ENCODE measurements at regions of chr17 and their contacts with region 1.

Region 1: GRCh38 chr17:45148183-45149036 is at the start of gene HEXIM1:
- DNase-seq: peak; percentile 99
- ATAC-seq: peak; percentile 78
- H3K4me3 Mint-ChIP-seq: peak within 1 kb of the TSS; percentile 99
- H3K27ac Mint-ChIP-seq: peak within 1 kb of the TSS; percentile 100
- H3K4me1 Mint-ChIP-seq: peaks cover 37% of the 10 kb centered on the region
- H3K27me3 Mint-ChIP-seq: no peaks in the 10 kb centered on the region
- total RNA-seq, gene HEXIM1: 27.1 to 27.3 TPM

Region 2: GRCh38 chr17:45051060-45051719 is 97.2 kb before region 1 on chr17 and contains the start of gene DCAKD:
- CTCF ChIA-PET with region 1: interaction called, 3 read pairs
- POLR2A ChIA-PET with region 1: interaction called, 9 read pairs
- intact Hi-C with region 1: loop called in 1 of 2 experiments (anchors 1 kb)
- DNase-seq: peak; percentile 96
- ATAC-seq: peak; percentile 97
- H3K4me3 Mint-ChIP-seq: peak within 1 kb of the TSS; percentile 87
- H3K27ac Mint-ChIP-seq: peak within 1 kb of the TSS; percentile 95
- H3K4me1 Mint-ChIP-seq: peaks cover 50% of the 10 kb centered on the region
- H3K27me3 Mint-ChIP-seq: no peaks in the 10 kb centered on the region
- total RNA-seq, gene DCAKD: 34.8 to 36.2 TPM

Region 3: GRCh38 chr17:45172454-45173286 is 24.3 kb after region 1 on chr17:
- CTCF ChIA-PET with region 1: interaction called, 41 read pairs
- POLR2A ChIA-PET with region 1: interaction called, 33 read pairs
- intact Hi-C with region 1: loop called (anchors 1 to 2 kb)
- DNase-seq: peak; percentile 81
- ATAC-seq: peak; percentile 88
- H3K4me3 Mint-ChIP-seq: peak overlapping the region; percentile 69
- H3K27ac Mint-ChIP-seq: peak overlapping the region; percentile 85
- H3K4me1 Mint-ChIP-seq: peaks cover 23% of the 10 kb centered on the region
- H3K27me3 Mint-ChIP-seq: no peaks in the 10 kb centered on the region

Region 4: GRCh38 chr17:45197555-45198334 is 49.3 kb after region 1 on chr17:
- CTCF ChIA-PET with region 1: interaction called, 72 read pairs
- POLR2A ChIA-PET with region 1: interaction called, 25 read pairs
- intact Hi-C with region 1: loop called in 1 of 2 experiments (anchors 1 kb)
- DNase-seq: peak; percentile 95
- ATAC-seq: peak; percentile 100
- H3K4me3 Mint-ChIP-seq: no peak overlapping the region
- H3K27ac Mint-ChIP-seq: no peak overlapping the region
- H3K4me1 Mint-ChIP-seq: peaks cover 2% of the 10 kb centered on the region
- H3K27me3 Mint-ChIP-seq: no peaks in the 10 kb centered on the region

Region 5: DNA sequence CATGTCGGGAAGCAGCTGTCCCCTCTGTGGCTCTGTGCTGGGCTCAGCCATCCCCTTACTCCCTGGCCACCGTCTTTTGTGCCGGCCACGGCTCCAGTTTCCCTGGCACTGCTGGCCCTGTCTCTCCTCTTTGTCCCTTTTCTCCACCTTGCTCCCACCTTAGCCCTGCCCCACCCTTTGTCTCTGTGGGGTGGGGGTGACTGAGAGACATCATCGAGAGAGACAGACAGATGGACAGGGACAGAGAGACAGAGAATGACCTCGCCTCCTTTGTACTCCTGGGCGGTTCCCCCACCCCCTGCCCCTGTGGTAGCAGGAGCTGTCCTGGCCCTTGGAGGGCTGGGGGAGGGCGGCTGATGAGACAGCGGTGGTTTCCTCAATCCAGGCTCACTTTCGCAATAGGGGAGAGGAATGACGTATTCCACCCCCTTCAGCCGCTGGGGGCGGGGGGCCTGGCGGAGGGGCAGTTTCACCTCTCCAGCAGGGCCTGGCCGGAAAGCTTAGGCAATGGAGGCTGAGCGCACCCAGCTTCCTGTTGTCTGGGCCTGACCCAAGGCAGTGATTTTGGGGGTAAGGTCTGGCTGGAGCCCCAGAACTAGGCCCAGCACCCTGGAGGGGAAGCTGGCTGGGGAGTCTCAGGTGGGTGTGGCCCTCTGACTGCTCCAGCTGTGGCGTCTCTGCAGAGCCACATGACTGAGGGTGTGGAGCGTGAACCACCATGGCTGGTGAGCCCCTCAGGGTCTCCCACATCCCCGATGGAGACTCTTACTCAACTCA is 80.5 kb after region 1 on chr17:
- CTCF ChIA-PET with region 1: interaction called, 10 read pairs
- POLR2A ChIA-PET with region 1: interaction called, 24 read pairs
- intact Hi-C with region 1: loop called in 1 of 2 experiments (anchors 1 kb)
- DNase-seq: peak; percentile 93
- ATAC-seq: peak; percentile 37
- H3K4me3 Mint-ChIP-seq: peak overlapping the region; percentile 94
- H3K27ac Mint-ChIP-seq: peak overlapping the region; percentile 100
- H3K4me1 Mint-ChIP-seq: peaks cover 82% of the 10 kb centered on the region
- H3K27me3 Mint-ChIP-seq: no peaks in the 10 kb centered on the region

Region 6: DNA sequence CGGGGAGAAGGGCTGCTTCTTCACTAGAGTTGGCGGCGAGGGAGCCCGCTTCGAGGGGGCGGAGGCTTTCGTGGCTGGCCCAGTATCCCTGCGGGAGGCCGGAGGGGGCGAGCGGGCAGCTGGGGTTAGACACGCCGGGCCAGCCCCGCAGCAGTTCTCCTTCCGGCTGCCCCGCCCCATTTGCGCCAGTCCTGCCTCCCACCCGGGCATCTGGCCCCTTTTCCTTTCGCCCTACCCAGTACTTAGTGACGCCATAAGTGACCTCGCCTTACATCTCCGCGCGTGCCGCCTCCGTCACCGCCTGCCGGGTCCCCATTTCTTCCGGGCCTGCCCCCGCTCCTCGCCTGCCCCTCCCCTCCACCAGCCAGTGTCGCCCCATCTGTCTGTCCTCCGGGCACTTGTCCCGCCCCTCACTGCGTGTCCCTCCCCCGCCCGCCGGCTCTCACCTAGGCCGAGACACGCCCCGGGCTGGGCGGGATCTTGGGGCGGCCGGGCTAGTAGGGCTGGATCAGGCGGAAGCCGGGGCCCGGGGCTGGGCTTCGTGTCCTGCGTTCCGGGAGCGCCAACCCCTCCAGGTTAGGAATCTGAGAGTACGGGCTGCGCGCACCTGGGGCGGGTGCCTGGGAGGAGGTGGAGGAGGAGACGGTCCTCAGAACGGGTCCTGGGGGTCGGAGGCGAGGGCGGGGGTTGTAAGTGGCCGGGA is 99.2 kb after region 1 on chr17:
- CTCF ChIA-PET with region 1: no interaction called
- POLR2A ChIA-PET with region 1: interaction called, 3 read pairs
- intact Hi-C with region 1: loop called in 1 of 2 experiments (anchors 1 kb)
- DNase-seq: peak; percentile 99
- ATAC-seq: peak; percentile 89
- H3K4me3 Mint-ChIP-seq: peak overlapping the region; percentile 83
- H3K27ac Mint-ChIP-seq: peak overlapping the region; percentile 92
- H3K4me1 Mint-ChIP-seq: peaks cover 57% of the 10 kb centered on the region
- H3K27me3 Mint-ChIP-seq: no peaks in the 10 kb centered on the region

Region 7: DNA sequence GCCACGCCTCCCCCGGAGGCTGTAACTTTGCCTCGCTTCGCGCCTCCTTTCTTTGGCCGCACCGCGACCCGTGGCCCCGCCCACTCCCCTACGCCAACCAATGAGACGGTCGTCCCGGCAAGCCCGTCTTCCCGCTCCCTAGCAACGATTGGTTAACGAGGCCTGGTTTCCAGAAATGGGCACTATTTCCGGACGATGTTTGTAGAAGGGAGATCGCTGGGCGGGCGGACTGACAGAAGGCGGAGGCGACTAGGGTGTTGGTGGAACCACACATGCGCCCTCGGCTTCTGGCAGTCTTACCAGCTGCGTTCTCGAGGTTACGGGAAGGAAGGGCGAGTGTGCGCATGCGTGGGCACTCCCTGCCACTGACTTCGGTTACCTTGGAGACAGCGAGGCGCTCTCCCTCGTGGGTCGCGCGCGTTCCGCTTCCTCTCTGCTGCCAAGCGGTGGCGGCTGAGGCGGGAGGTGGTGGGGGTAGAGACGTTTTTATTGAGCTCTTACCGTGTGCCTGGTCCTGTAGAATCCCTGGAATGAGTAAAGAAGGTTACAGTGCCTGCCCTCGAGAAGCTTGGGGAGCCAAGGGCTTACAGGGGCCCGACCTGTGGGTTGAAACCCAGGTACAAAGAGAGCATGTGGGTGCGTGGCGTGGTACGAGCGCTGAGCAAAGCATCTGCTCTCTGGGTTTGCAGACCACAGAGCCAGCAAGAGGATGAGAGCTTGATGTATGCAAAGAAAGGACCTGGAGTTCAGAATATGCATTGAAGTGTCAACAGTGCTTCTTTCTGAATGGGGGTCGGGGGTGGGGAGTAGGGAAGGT is 168.9 kb after region 1 on chr17:
- CTCF ChIA-PET with region 1: interaction called, 7 read pairs
- POLR2A ChIA-PET with region 1: interaction called, 38 read pairs
- intact Hi-C with region 1: loop called (anchors 1 to 2 kb)
- DNase-seq: peak; percentile 100
- ATAC-seq: peak; percentile 81
- H3K4me3 Mint-ChIP-seq: peak overlapping the region; percentile 91
- H3K27ac Mint-ChIP-seq: peak overlapping the region; percentile 89
- H3K4me1 Mint-ChIP-seq: peaks cover 65% of the 10 kb centered on the region
- H3K27me3 Mint-ChIP-seq: no peaks in the 10 kb centered on the region

Region 8: DNA sequence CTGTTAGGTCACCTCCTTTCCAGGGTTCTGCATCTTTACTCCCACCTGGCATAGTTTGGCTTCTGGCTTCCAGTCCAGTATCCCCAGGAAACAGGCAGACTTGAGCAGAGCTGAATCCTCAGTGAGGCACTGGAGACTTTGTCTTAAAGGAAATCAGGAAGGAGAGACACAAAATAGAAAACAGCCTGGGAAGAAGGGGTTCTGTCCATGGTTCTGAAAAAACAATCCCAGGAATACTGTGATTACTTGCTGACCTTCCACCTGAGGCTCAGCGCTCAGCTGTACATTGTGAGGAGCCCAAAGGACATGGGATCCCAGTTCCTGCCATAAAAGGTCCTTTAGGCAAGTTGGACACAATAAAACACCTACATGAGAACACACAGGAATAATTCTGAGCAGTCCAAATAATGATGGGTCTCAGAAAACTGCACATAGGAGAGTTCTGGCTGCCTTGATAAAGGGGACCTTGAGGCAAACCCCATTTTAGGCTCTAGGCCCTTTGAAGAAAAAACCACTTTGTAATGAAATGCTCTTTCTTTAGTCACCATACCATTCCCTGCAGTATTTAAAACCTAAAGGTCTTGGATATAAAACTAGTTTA is 554.4 kb after region 1 on chr17:
- CTCF ChIA-PET with region 1: no interaction called
- POLR2A ChIA-PET with region 1: no interaction called
- intact Hi-C with region 1: no loop called
- DNase-seq: no peak
- ATAC-seq: no peak
- H3K4me3 Mint-ChIP-seq: no peak overlapping the region
- H3K27ac Mint-ChIP-seq: no peak overlapping the region
- H3K4me1 Mint-ChIP-seq: peaks cover 11% of the 10 kb centered on the region
- H3K27me3 Mint-ChIP-seq: peaks cover 31% of the 10 kb centered on the region

Measured in activated CD4-positive, alpha-beta T cell treated with anti-CD3 and anti-CD28 coated beads for 36 hours (primary cell).